ENCODE measurements at regions of chr6 and their contacts with region 1.

Region 1: GRCh38 chr6:111210194-111210728 is 123.0 kb downstream of the SLC16A10 start:
- DNase-seq: peak; percentile 46
- ATAC-seq: peak; percentile 70
- H3K4me3 Mint-ChIP-seq: no peak overlapping the region
- H3K27ac Mint-ChIP-seq: no peak overlapping the region
- H3K4me1 Mint-ChIP-seq: peaks cover 1% of the 10 kb centered on the region
- H3K27me3 Mint-ChIP-seq: no peaks in the 10 kb centered on the region

Region 2: DNA sequence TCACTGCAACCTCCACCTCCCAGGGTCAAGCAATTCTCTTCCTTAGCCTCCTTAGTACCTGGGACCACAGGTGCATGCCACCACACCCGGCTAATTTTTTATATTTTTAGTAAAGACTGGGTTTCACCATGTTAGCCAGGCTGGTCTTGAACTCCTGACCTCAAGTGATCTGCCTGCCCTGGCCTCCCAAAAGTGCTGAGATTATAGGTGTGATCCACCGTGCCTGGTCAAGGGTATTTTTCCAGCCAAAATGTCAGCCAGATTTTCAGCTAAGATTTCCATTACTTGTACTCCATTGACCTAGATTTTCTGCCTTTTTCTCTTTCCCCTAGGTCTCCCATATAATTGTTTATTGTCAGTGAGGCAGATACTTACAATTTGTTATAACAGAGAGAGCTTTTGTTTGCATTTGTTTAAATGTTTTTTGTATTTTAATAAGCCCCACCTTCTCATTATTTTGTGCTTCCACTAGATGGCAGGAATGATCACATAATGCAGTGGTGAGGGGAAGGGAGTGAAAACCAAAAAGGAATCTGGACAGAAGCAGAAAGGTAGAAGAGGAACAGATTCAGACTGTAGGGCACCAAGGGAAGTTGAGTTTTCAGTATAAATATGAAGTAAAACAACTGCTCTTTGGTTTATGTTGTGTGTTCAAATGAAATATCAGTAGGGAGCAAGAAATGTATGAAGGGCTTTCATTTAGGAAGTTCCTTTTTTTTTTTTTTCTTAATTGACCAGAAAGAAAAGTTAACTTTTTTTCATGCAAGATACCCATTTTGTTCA is 198.7 kb before region 1 on chr6:
- CTCF ChIA-PET with region 1: interaction called, 52 read pairs
- DNase-seq: no peak
- ATAC-seq: peak; percentile 66
- H3K4me3 Mint-ChIP-seq: no peak overlapping the region
- H3K27ac Mint-ChIP-seq: no peak overlapping the region
- H3K4me1 Mint-ChIP-seq: peaks cover 4% of the 10 kb centered on the region
- H3K27me3 Mint-ChIP-seq: no peaks in the 10 kb centered on the region

Region 3: DNA sequence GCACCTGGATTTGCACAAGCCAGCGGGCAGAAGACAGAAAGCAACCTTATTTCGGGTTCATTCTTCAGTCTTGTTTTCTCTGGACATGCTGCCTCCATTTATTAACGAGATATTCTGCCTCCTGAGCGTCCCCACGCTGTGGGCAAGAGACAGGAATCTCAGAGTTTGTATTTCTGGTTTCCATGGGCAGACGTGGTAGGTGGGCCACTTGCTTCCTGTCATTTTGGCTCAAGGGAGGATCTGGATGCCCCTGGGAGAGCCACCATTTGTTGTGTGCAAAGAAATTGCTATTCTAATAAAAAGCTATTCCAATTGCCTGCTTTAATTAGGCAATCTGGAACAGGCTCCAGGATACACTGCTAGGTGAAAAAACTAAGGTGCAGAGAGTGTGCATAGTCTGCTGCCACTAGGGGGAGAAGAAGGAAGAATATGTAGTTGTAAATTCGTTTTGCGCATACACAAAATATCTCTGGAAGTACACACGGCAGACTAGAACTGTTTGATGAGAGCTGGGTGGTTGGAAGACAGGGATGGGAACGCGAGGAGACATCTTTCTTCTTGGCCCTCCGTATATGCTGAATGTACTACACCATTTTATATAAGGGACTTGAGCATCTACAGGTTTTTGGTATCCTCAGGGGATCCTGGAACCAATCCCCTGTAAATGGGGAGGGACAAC is 153.0 kb before region 1 on chr6:
- CTCF ChIA-PET with region 1: interaction called, 33 read pairs
- DNase-seq: no peak
- ATAC-seq: peak; percentile 60
- H3K4me3 Mint-ChIP-seq: no peak overlapping the region
- H3K27ac Mint-ChIP-seq: no peak overlapping the region
- H3K4me1 Mint-ChIP-seq: peaks cover 2% of the 10 kb centered on the region
- H3K27me3 Mint-ChIP-seq: peaks cover 25% of the 10 kb centered on the region

Region 4: GRCh38 chr6:111307275-111307842 is 97.1 kb after region 1 on chr6:
- CTCF ChIA-PET with region 1: no interaction called
- DNase-seq: no peak
- ATAC-seq: no peak
- H3K4me3 Mint-ChIP-seq: no peak overlapping the region
- H3K27ac Mint-ChIP-seq: no peak overlapping the region
- H3K4me1 Mint-ChIP-seq: no peaks in the 10 kb centered on the region
- H3K27me3 Mint-ChIP-seq: no peaks in the 10 kb centered on the region

Region 5: GRCh38 chr6:111406200-111406721 is 196.0 kb after region 1 on chr6:
- CTCF ChIA-PET with region 1: no interaction called
- DNase-seq: no peak
- ATAC-seq: peak; percentile 95
- H3K4me3 Mint-ChIP-seq: peak overlapping the region; percentile 3
- H3K27ac Mint-ChIP-seq: peak overlapping the region; percentile 79
- H3K4me1 Mint-ChIP-seq: peaks cover 22% of the 10 kb centered on the region
- H3K27me3 Mint-ChIP-seq: no peaks in the 10 kb centered on the region